Common myeloid progenitor, CD34-positive (primary cell): ENCODE measurements at regions of chr10 and their contacts with region 1.

Region 1: DNA sequence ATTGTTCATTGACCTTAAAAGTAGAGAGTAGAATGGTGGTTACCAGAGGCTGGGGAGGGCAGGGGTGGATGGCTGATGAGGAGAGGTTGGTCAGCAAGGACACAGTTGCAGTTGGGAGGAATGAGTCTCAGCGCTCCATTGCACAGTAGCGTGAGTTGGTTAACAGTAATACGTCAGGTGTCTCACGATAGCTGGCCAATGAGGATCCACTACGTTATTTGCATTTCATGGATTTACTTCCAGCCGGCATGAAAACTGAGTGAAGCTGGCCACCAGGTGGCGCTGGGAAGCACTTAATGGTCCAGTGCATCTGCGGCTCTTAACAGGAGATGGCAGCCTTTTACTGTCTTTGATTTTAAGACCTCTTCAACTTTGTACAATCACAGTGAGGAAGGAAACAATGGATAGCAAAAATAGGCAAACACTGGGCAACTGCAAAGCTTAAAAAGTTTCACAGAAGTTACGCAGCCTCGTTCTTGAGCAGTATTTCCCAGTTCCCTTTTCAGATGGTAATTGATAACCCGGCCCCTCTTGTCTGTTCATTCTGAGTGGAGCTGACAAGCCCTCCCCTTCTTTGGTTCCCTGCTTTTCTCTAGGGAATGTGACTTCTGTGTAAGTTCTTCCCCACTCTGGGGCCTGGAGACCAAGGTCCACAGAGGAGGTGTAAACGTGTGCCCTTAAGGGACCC is 23.7 kb downstream of the AKR1E2 start:
- DNase-seq: peak; percentile 94 to 97 (median 95)
- H3K4me3 ChIP-seq: peak overlapping the region in 2 of 7 experiments; percentile 48
- H3K27ac ChIP-seq: peak overlapping the region in 1 of 2 experiments; percentile 58
- H3K4me1 ChIP-seq: peaks cover 0 to 23% (median 12%) of the 10 kb centered on the region in 4 experiments
- H3K27me3 ChIP-seq: no peaks in the 10 kb centered on the region

Region 2: DNA sequence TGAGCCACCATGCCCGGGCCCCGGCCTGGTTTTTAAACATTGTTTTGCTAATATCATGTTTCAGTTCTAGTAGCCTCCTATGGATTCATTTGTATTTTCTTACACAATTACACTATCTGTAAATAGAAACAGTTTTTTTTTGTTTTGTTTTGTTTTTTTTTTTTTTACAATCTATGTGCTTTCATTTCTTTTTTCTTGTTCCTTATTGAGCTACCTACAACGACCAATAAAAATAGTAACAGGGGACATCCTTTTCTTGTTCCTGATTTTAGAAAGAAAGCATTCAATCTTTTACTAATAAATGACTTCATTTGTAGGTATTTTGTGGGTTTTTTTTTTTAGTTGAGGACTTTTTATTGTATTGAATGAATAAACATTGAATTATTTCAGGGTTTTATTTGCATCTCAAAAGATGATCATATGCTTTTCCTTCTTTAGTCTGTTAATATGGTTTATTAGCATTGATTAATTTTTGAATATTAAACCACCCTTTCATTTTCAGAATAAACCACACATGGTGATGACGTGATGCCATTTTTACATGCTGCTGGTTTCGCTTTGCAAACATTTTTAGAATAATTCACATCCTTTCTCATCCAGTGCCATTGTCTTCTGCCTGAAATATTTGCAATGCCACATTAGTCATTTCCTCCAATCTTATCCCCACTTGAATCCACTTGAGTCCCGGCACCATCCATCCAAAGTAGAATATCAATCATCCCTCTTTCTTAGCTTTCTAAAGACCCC is 41.8 kb before region 1 on chr10:
- CTCF ChIA-PET with region 1: no interaction called
- POLR2A ChIA-PET with region 1: no interaction called
- DNase-seq: no peak
- H3K4me3 ChIP-seq: no peak overlapping the region
- H3K27ac ChIP-seq: no peak overlapping the region
- H3K4me1 ChIP-seq: no peaks in the 10 kb centered on the region
- H3K27me3 ChIP-seq: no peaks in the 10 kb centered on the region

Region 3: GRCh38 chr10:4820804-4821401 is 28.8 kb before region 1 on chr10:
- CTCF ChIA-PET with region 1: interaction called, 23 read pairs
- POLR2A ChIA-PET with region 1: no interaction called
- DNase-seq: no peak
- H3K4me3 ChIP-seq: no peak overlapping the region
- H3K27ac ChIP-seq: no peak overlapping the region
- H3K4me1 ChIP-seq: no peaks in the 10 kb centered on the region
- H3K27me3 ChIP-seq: no peaks in the 10 kb centered on the region

Region 4: GRCh38 chr10:4839401-4839800 is 10.3 kb before region 1 on chr10:
- CTCF ChIA-PET with region 1: interaction called, 53 read pairs
- POLR2A ChIA-PET with region 1: no interaction called
- DNase-seq: no peak
- H3K4me3 ChIP-seq: no peak overlapping the region
- H3K27ac ChIP-seq: no peak overlapping the region
- H3K4me1 ChIP-seq: no peaks in the 10 kb centered on the region
- H3K27me3 ChIP-seq: no peaks in the 10 kb centered on the region

Region 5: DNA sequence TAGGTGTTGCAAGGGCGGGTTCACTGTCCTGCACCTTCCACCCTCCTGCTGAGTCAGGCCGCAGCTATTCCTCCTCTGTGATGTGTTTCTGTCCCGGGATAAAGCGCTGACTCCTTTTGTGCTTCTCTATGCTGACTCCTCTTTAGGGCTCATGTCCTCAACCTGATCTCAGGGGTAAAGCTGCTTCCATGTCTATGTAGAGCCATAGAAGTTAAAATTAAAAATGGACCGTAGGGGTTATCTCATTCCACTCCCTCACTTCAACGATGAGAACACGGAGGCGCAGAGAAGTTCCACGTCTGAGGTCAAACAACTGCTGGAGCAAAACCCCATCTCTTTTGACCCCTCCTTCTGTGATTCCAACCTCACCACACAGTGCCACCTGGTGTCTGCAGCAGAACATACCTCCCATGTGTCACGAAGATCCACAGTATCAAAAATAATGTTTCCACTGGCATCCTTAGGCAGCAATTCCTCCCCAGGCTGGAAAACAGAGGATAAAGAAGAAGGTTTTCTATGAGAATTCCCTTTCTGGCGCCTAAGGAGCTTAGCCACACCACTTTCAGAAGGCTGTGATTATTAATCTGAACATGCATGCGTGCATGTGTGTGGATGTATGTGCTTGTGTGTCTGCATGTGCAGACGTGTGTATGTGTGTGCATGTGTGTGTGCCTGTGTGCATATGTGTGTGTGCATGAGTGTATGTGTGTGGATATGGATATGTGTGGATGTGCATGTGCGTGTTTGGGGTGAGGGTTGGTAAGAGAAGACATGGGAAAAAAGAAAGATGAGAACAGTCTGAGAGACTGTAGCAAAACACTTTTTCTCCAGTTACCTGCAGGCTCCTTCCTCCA is 433.8 kb after region 1 on chr10:
- CTCF ChIA-PET with region 1: interaction called, 28 read pairs
- POLR2A ChIA-PET with region 1: no interaction called
- DNase-seq: peak; percentile 82 to 90 (median 89)
- H3K4me3 ChIP-seq: peak overlapping the region in 2 of 7 experiments; percentile 23 to 42
- H3K27ac ChIP-seq: no peak overlapping the region
- H3K4me1 ChIP-seq: peaks cover 17 to 33% (median 30%) of the 10 kb centered on the region in 4 experiments
- H3K27me3 ChIP-seq: no peaks in the 10 kb centered on the region

Region 6: GRCh38 chr10:5381187-5381586 is 531.5 kb after region 1 on chr10:
- CTCF ChIA-PET with region 1: interaction called, 13 read pairs
- POLR2A ChIA-PET with region 1: no interaction called
- DNase-seq: peak in 1 of 3 donors; percentile 26
- H3K4me3 ChIP-seq: no peak overlapping the region
- H3K27ac ChIP-seq: no peak overlapping the region
- H3K4me1 ChIP-seq: no peaks in the 10 kb centered on the region
- H3K27me3 ChIP-seq: no peaks in the 10 kb centered on the region

Region 7: GRCh38 chr10:5434017-5434753 is 584.5 kb after region 1 on chr10:
- CTCF ChIA-PET with region 1: interaction called, 22 read pairs
- POLR2A ChIA-PET with region 1: no interaction called
- DNase-seq: peak; percentile 50 to 67 (median 61)
- H3K4me3 ChIP-seq: no peak overlapping the region
- H3K27ac ChIP-seq: no peak overlapping the region
- H3K4me1 ChIP-seq: peaks cover 0 to 2% (median 0%) of the 10 kb centered on the region in 4 experiments
- H3K27me3 ChIP-seq: no peaks in the 10 kb centered on the region